Activated T-helper 2 cell treated with anti-CD3 and anti-CD28 coated beads, Interferon-gamma antibody, Interleukin-2, Interleukin-4, amounts not matched to agents 10 μg/mL and 5 μg/mL and 100 μg/mL, durations not matched to agents 14 hours and 24 hours and 36 hours (primary cell): ENCODE measurements at regions of chr5 and their contacts with region 1.

Region 1: GRCh38 chr5:72046106-72046505 is 61.2 kb upstream of the MAP1B start:
- DNase-seq: no peak
- H3K4me3 Mint-ChIP-seq: no peak overlapping the region
- H3K27ac Mint-ChIP-seq: no peak overlapping the region
- H3K4me1 Mint-ChIP-seq: no peaks in the 10 kb centered on the region
- H3K27me3 Mint-ChIP-seq: no peaks in the 10 kb centered on the region

Region 2: GRCh38 chr5:71782771-71783770 is 263.0 kb before region 1 on chr5:
- intact Hi-C with region 1: no loop called
- DNase-seq: no peak
- H3K4me3 Mint-ChIP-seq: peak overlapping the region; percentile 23
- H3K27ac Mint-ChIP-seq: no peak overlapping the region
- H3K4me1 Mint-ChIP-seq: peaks cover 15% of the 10 kb centered on the region
- H3K27me3 Mint-ChIP-seq: peaks cover 4% of the 10 kb centered on the region

Region 3: GRCh38 chr5:71996789-71997188 is 49.3 kb before region 1 on chr5:
- intact Hi-C with region 1: loop called (anchors 2 kb)
- DNase-seq: no peak
- H3K4me3 Mint-ChIP-seq: no peak overlapping the region
- H3K27ac Mint-ChIP-seq: no peak overlapping the region
- H3K4me1 Mint-ChIP-seq: no peaks in the 10 kb centered on the region
- H3K27me3 Mint-ChIP-seq: peaks cover 1% of the 10 kb centered on the region